ENCODE measurements at regions of chr5 and their contacts with region 1.

Region 1: DNA sequence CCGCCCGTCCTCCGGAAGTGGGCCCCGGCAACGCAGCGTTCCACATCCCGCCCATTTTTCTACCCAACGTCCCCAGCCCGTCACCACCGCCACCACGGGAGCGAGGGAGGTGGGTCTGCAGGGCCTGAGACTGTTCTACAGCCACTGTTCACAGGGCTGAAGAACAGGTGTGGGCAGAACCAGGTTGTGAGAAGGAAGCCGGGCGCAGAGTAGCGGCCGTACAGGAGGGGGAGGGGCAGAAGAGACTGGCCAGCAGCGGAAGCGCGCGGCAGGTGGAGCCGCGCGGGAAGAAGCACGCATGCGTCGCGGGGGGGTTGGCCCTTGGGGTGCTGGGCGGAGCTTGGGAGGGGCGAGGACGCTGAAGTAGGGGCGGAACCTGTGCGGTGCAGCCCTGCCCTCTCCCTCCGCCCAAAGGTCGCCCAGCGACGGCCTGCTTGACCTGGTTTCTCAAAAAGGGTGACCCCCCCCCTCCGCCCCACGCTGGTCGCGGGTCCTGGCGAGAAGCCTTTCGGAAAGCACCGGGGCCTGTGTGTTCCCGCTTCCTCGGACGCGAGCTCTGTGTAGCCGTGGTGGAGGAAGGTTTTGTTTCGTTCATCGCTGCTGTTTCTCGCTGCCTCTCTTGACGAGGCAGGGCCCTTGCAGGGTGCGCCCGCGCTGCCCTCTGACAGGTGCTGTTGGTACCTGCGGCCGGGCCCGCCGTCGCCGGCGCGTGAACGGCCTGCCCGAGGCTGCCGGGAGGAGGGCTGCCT is 7.8 kb upstream of the MGAT1 start:
- DNase-seq: peak; percentile 91 to 97 (median 94)
- H3K4me3 ChIP-seq: peak overlapping the region; percentile 62 to 95 (median 84)
- H3K27ac ChIP-seq: peak overlapping the region; percentile 92 to 100 (median 99)
- H3K27me3 ChIP-seq: no peaks in the 10 kb centered on the region
- CTCF ChIP-seq: peak in 8 of 56 donors; percentile 0 to 25 (median 16)

Region 2: DNA sequence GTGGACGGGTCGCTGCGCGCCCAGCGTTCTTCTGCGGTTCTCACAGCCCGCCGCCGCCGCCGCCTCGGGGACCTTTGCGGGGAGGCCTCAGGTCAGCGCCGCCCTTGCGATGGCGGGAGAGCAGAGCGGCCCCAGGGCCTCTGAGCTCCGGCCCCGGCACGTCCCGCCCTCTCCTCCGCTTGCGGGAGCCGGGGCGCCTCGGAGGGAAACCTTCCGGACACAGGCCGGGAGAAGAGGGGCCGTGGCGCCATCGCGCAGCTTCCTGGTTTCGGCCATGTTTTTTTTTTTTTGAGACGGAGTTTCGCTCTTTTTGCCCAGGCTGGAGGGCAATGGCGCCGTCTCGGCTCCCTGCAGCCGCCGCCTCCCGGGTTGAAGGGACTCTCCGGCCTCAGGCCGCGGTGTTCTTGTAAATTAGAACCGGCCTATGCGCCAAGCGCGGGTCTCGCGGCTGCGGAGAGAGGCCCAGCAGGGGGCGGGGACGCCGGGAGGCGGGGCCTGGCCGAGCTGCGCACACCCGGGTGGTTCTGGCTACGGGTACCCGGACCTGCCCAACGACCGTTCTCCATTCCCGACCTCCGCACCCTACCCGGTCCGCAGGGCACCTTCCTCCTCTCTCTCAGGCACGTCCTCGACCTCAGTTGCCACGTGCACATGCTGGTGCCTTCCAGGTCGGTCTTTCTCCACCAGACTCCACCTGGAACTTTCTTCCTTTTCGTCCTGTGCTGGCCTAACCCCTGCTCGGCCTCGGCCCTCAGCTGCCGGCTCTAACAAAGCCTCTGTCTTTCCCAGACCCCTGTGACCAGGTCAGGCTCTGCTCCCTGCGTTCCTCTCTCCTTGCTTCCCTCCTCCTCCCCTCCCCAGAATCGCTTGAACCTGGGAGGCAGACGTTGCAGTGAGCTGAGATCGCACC is 21.0 kb after region 1 on chr5:
- intact Hi-C with region 1: loop called in 1 of 2 experiments (anchors 1 kb)
- DNase-seq: peak; percentile 77 to 92 (median 86)
- H3K4me3 ChIP-seq: peak overlapping the region; percentile 74 to 99 (median 90)
- H3K27ac ChIP-seq: peak overlapping the region; percentile 86 to 100 (median 98)
- H3K27me3 ChIP-seq: no peaks in the 10 kb centered on the region
- CTCF ChIP-seq: peak in 49 of 56 donors; percentile 12 to 65 (median 44)

Region 3: GRCh38 chr5:181181650-181182565 is 371.5 kb after region 1 on chr5:
- intact Hi-C with region 1: loop called (anchors 10 kb)
- DNase-seq: peak in 3 of 10 donors; percentile 23 to 69 (median 34)
- H3K4me3 ChIP-seq: no peak overlapping the region
- H3K27ac ChIP-seq: no peak overlapping the region
- H3K27me3 ChIP-seq: peaks cover 0 to 3% (median 0%) of the 10 kb centered on the region in 45 donors
- CTCF ChIP-seq: peak; percentile 14 to 77 (median 60)

Measured in dorsolateral prefrontal cortex (tissue), 120 donors.